Kidney (tissue), 22 donors: ENCODE measurements at regions of chr10 and their contacts with region 1.

Region 1: DNA sequence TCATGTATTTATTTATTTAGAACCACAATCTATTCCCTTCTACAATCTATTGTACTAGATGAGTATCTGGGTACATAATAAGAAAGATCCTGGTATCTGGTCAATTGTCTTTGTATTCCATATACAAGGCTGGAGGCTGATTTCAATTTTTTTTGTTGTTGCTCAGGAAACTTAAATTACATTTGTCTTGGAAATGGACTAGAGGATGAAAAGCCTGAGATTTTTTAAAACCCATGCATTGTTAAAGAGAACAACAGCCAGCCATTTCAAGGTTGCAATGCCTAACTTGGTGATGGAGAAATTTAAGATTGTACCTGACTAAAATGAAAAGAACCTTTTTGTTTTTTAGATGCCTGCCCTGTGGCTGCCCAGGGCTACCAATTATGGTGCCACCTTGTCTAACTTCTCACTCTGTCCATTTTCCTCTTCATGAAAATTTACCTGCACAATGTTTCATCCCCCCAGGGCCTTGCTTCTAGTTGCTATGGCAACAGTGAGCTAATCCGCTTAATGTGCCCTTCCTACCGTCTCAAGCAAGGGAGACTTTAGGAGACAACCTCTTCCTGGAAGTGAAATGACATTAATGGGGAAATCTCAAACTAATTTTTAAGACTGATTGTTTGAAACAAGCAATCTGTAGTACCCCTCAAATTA is 203.7 kb upstream of the PHYHIPL start:
- DNase-seq: peak in 3 of 5 donors; percentile 24 to 50 (median 30)
- H3K4me3 ChIP-seq: no peak overlapping the region
- H3K27ac ChIP-seq: no peak overlapping the region
- H3K4me1 ChIP-seq: no peaks in the 10 kb centered on the region
- H3K27me3 ChIP-seq: no peaks in the 10 kb centered on the region
- CTCF ChIP-seq: no peak

Region 2: DNA sequence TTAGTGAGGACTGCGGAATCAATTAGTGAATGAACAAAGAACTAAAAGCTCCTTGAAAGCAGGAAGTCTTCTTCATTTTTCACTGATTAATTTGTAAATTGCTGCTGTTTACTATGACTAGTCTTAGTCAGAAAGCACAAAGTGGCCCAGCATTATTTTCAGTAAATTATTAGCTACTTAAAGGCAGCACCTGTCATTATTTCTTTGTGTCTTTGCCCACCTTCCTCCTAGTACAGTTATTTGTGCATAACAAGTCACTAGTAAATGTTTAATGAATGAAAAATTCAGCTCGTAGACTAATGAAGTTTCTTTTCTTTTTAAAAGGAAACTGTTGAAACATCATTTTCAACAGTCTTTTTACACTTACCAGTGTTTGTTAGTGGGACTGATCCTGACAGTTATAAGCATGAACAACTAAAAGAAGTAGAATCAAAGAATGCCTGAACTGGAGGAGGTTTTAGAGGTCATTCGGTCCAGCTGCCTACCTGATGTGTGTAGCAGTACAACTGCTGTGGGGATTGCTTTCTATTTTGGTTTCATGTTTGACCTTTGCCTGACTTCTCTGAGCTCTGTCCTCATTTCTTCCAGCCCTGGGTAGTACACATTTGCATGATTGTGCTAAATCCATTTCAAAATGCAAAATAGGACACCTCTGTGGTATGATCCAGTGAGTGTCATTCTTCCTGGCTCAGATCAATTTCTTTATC is 63.8 kb after region 1 on chr10:
- intact Hi-C with region 1: loop called (anchors 5 kb)
- DNase-seq: peak in 2 of 5 donors; percentile 18 to 23
- H3K4me3 ChIP-seq: peak overlapping the region in 2 of 3 donors; percentile 8 to 22
- H3K27ac ChIP-seq: peak overlapping the region; percentile 73 to 93
- H3K4me1 ChIP-seq: peaks cover 0 to 14% (median 7%) of the 10 kb centered on the region in 3 donors
- H3K27me3 ChIP-seq: no peaks in the 10 kb centered on the region
- CTCF ChIP-seq: no peak

Region 3: GRCh38 chr10:59079386-59080226 is 106.9 kb after region 1 on chr10:
- intact Hi-C with region 1: no loop called
- DNase-seq: no peak
- H3K4me3 ChIP-seq: no peak overlapping the region
- H3K27ac ChIP-seq: no peak overlapping the region
- H3K4me1 ChIP-seq: peaks cover 0 to 10% (median 2%) of the 10 kb centered on the region in 3 donors
- H3K27me3 ChIP-seq: no peaks in the 10 kb centered on the region
- CTCF ChIP-seq: no peak